Activated CD8-positive, alpha-beta memory T cell treated with anti-CD3 and anti-CD28 coated beads, Interleukin-2, amount 10 ng/mL, durations not matched to agents 7 days and 5 days (primary cell): ENCODE measurements at regions of chr13 and their contacts with region 1.

Region 1: GRCh38 chr13:21476893-21477472 is 17.9 kb upstream of the ZDHHC20 start:
- DNase-seq: peak; percentile 90
- ATAC-seq: peak; percentile 85
- H3K4me3 Mint-ChIP-seq: peak overlapping the region; percentile 79
- H3K27ac Mint-ChIP-seq: peak overlapping the region; percentile 67
- H3K4me1 Mint-ChIP-seq: peaks cover 25% of the 10 kb centered on the region
- H3K27me3 Mint-ChIP-seq: peaks cover 10% of the 10 kb centered on the region

Region 2: DNA sequence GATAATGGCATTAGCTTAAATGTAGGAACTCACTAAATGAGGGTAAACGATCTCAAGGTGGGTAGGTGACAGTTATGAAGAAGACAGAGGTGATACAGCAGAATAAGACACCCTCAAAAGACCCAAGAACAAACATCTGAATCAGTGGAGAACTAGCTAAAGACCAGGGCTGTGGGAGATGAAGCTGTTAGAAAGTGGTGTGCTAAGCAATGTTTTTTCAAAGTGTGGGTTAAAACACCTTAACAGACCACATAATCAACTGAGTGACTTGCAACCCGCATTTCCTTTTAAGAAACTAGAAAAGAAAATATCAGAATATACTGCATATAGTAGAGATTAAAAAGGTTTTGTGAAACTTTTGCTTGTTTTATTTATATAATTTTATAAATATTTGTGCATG is 87.9 kb before region 1 on chr13:
- CTCF ChIA-PET with region 1: interaction called, 13 read pairs
- DNase-seq: no peak
- ATAC-seq: no peak
- H3K4me3 Mint-ChIP-seq: no peak overlapping the region
- H3K27ac Mint-ChIP-seq: peak overlapping the region; percentile 24
- H3K4me1 Mint-ChIP-seq: peaks cover 13% of the 10 kb centered on the region
- H3K27me3 Mint-ChIP-seq: no peaks in the 10 kb centered on the region

Region 3: GRCh38 chr13:21458813-21459701 is 17.9 kb before region 1 on chr13 and contains the start of gene ZDHHC20:
- CTCF ChIA-PET with region 1: interaction called, 28 read pairs
- DNase-seq: peak; percentile 89
- ATAC-seq: peak; percentile 89
- H3K4me3 Mint-ChIP-seq: peak within 1 kb of the TSS; percentile 89
- H3K27ac Mint-ChIP-seq: peak within 1 kb of the TSS; percentile 90
- H3K4me1 Mint-ChIP-seq: peaks cover 34% of the 10 kb centered on the region
- H3K27me3 Mint-ChIP-seq: no peaks in the 10 kb centered on the region
- total RNA-seq, gene ZDHHC20: 65.7 to 68.0 TPM

Region 4: GRCh38 chr13:21511849-21512248 is 34.9 kb after region 1 on chr13:
- CTCF ChIA-PET with region 1: no interaction called
- DNase-seq: no peak
- ATAC-seq: no peak
- H3K4me3 Mint-ChIP-seq: no peak overlapping the region
- H3K27ac Mint-ChIP-seq: no peak overlapping the region
- H3K4me1 Mint-ChIP-seq: no peaks in the 10 kb centered on the region
- H3K27me3 Mint-ChIP-seq: no peaks in the 10 kb centered on the region